Heart right ventricle (tissue), 16 donors: ENCODE measurements at regions of chr4 and their contacts with region 1.

Region 1: GRCh38 chr4:31674313-31674947 is 954.3 kb downstream of the PCDH7 start:
- DNase-seq: no peak
- ATAC-seq: peak in 1 of 8 donors; percentile 25
- H3K4me3 ChIP-seq: no peak overlapping the region
- H3K27ac ChIP-seq: no peak overlapping the region
- H3K4me1 ChIP-seq: no peaks in the 10 kb centered on the region
- H3K27me3 ChIP-seq: no peaks in the 10 kb centered on the region
- CTCF ChIP-seq: peak in 7 of 9 donors; percentile 36 to 56 (median 44)

Region 2: GRCh38 chr4:30714408-30715027 is 959.9 kb before region 1 on chr4:
- intact Hi-C with region 1: loop called in 6 of 10 experiments (anchors 2 to 10 kb)
- DNase-seq: peak in 1 of 2 donors; percentile 18
- ATAC-seq: peak in 1 of 8 donors; percentile 48
- H3K4me3 ChIP-seq: no peak overlapping the region
- H3K27ac ChIP-seq: no peak overlapping the region
- H3K4me1 ChIP-seq: peaks cover 0 to 27% (median 14%) of the 10 kb centered on the region in 9 donors
- H3K27me3 ChIP-seq: peaks cover 0 to 31% (median 17%) of the 10 kb centered on the region in 7 donors
- CTCF ChIP-seq: peak; percentile 28 to 72 (median 64)

Region 3: DNA sequence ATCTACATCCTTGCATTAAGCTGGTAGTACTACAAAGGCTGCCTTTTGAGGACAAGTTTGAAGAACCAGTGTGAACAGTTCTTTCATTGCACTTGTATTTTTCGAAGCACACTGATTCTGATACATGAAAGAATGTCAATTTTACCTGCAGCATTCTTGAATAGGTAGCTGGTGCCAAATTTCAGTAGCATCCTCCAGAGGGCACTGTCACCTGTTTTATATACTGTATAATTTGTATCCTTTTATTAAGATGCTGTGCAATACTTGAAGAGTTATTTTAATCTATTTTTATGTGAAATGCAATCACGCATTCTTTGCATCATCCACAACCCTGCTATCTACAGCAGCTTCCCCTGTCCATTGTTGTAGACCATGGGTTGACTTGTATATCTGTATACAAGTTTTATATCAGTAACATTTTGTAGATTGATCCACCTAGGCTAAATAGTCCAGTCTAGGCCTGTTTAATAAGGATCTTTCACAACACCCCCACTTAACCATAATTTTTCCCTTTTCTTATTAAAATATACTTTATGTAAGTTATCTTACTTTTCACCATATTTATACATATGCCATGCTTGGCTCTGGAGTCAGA is 628.6 kb before region 1 on chr4:
- intact Hi-C with region 1: loop called in 3 of 10 experiments (anchors 10 kb)
- DNase-seq: no peak
- ATAC-seq: peak in 3 of 8 donors; percentile 25 to 57 (median 53)
- H3K4me3 ChIP-seq: no peak overlapping the region
- H3K27ac ChIP-seq: no peak overlapping the region
- H3K4me1 ChIP-seq: peaks cover 0 to 12% (median 0%) of the 10 kb centered on the region in 9 donors
- H3K27me3 ChIP-seq: no peaks in the 10 kb centered on the region
- CTCF ChIP-seq: peak in 7 of 9 donors; percentile 19 to 58 (median 45)

Region 4: GRCh38 chr4:31059753-31060522 is 614.5 kb before region 1 on chr4:
- intact Hi-C with region 1: loop called in 1 of 10 experiments (anchors 10 kb)
- DNase-seq: no peak
- ATAC-seq: no peak
- H3K4me3 ChIP-seq: no peak overlapping the region
- H3K27ac ChIP-seq: no peak overlapping the region
- H3K4me1 ChIP-seq: no peaks in the 10 kb centered on the region
- H3K27me3 ChIP-seq: no peaks in the 10 kb centered on the region
- CTCF ChIP-seq: no peak

Region 5: DNA sequence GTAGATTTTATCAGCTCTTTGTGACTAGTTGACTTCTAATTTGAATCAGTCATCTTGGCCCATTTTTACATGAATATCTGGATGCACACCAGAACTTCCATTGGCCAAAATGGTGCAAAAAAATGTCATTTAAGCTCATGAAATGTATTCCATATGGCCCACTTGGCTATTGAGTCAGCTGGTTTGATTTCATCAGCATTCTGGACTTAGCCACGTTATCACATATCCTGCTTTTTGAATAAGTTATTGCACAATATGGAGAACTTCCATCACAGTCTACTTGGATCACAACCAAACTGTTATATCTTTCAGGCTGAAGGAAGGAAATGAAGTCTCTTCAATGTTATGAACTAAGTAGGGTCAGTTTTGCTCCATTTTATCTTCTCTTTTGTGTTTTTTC is 313.6 kb before region 1 on chr4:
- intact Hi-C with region 1: loop called in 1 of 10 experiments (anchors 10 kb)
- DNase-seq: no peak
- ATAC-seq: peak in 5 of 8 donors; percentile 51 to 90 (median 82)
- H3K4me3 ChIP-seq: no peak overlapping the region
- H3K27ac ChIP-seq: no peak overlapping the region
- H3K4me1 ChIP-seq: no peaks in the 10 kb centered on the region
- H3K27me3 ChIP-seq: no peaks in the 10 kb centered on the region
- CTCF ChIP-seq: no peak